AG04450 (cell line): ENCODE measurements at regions of chr4 and their contacts with region 1.

Region 1: GRCh38 chr4:26719954-26720552 is 136.2 kb downstream of the TBC1D19 start:
- DNase-seq: no peak
- H3K4me3 ChIP-seq: no peak overlapping the region
- H3K27ac ChIP-seq: no peak overlapping the region
- H3K27me3 ChIP-seq: no peaks in the 10 kb centered on the region
- CTCF ChIP-seq: peak; percentile 88

Region 2: GRCh38 chr4:26410385-26411293 is 309.4 kb before region 1 on chr4:
- CTCF ChIA-PET with region 1: interaction called, 26 read pairs
- POLR2A ChIA-PET with region 1: no interaction called
- DNase-seq: no peak
- H3K4me3 ChIP-seq: no peak overlapping the region
- H3K27ac ChIP-seq: no peak overlapping the region
- H3K27me3 ChIP-seq: no peaks in the 10 kb centered on the region
- CTCF ChIP-seq: peak; percentile 61

Region 3: DNA sequence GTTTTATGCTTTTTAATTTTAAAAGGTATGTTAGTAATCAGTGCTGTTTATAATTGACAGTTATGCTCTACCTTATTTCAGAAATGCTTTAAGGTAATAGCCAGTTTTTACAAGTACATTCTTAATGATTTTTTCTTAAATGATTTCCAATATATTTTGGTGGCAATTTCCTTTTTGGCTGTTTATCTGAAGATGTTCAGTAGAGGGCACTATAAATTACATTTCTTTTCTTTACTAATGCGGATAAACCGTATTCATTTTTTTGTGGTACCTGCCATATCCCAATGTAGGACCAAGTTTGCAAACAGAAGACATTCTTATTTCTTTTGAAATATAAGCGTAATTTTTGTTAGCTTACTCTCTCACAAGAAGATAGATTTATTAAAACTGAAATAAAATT is 295.2 kb before region 1 on chr4:
- CTCF ChIA-PET with region 1: interaction called, 11 read pairs
- POLR2A ChIA-PET with region 1: no interaction called
- DNase-seq: no peak
- H3K4me3 ChIP-seq: no peak overlapping the region
- H3K27ac ChIP-seq: no peak overlapping the region
- H3K27me3 ChIP-seq: no peaks in the 10 kb centered on the region
- CTCF ChIP-seq: peak; percentile 12; the same call in 1 of the 2 replicates

Region 4: DNA sequence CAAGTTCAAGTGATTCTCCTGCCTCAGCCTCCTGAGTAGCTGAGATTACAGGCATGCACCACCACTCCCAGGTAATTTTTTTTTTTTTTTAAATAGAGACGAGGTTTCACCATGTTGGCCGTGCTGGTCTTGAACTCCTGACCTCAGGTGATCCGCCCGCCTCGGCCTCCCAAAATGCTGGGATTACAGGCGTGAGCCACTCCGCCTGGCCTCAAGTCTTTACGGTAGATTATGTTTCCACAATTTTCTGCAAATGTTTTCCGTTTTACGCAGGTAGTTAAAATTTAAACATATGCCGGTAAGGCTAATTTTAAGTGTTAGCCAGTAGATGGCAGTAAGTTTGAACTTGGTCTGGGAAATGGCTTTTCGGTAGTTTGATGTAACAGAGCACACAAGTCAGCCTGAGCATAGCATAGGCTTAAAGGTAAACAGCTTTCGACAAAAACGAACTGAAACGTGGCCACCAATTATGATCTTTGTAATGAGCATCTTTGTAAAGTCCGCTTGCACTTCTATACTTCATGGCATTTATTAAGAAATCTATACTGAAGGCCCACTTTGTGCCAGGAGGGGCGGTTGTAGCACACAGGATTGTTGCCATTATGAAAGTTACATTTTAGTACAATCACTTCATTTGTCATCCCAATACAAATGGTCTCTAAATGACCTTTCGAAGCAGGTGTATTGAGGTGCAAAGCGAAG is 260.8 kb before region 1 on chr4:
- CTCF ChIA-PET with region 1: interaction called, 62 read pairs
- POLR2A ChIA-PET with region 1: no interaction called
- DNase-seq: peak; percentile 66
- H3K4me3 ChIP-seq: peak overlapping the region; percentile 15; the same call in 1 of the 2 replicates
- H3K27ac ChIP-seq: peak overlapping the region; percentile 76
- H3K27me3 ChIP-seq: no peaks in the 10 kb centered on the region
- CTCF ChIP-seq: peak; percentile 65

Region 5: DNA sequence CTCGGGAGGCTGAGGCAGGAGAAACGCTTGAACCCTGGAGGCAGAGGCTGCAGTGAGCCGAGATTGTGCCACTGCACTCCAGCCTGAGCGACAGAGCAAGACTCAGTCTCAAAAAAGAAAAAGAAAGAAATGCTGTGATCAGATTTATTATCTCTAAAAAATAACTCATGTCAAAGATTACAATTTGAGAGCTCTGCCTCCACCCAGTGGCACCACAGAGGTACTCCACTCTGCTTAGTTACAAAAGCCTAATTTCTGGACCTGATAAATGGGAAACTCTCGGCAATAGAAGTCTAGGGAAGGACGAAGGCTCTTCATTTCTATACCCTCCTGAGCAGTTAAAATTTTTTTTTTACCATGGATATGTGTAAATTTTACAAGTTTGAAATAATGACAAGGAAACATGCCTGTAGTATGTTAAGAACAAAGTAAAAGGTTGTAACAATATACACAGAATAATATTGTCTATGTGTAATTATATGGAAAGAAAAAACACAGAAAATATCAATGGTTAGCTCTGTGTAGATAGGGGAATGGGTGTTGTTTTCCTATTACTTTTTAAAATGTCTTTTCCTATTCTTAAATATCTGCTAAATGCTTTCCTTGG is 290.4 kb after region 1 on chr4:
- CTCF ChIA-PET with region 1: interaction called, 16 read pairs
- POLR2A ChIA-PET with region 1: no interaction called
- DNase-seq: no peak
- H3K4me3 ChIP-seq: no peak overlapping the region
- H3K27ac ChIP-seq: no peak overlapping the region
- H3K27me3 ChIP-seq: no peaks in the 10 kb centered on the region
- CTCF ChIP-seq: peak; percentile 87